Activated naive CD4-positive, alpha-beta T cell treated with anti-CD3 and anti-CD28 coated beads for 36 hours (primary cell): ENCODE measurements at regions of chr3 and their contacts with region 1.

Region 1: DNA sequence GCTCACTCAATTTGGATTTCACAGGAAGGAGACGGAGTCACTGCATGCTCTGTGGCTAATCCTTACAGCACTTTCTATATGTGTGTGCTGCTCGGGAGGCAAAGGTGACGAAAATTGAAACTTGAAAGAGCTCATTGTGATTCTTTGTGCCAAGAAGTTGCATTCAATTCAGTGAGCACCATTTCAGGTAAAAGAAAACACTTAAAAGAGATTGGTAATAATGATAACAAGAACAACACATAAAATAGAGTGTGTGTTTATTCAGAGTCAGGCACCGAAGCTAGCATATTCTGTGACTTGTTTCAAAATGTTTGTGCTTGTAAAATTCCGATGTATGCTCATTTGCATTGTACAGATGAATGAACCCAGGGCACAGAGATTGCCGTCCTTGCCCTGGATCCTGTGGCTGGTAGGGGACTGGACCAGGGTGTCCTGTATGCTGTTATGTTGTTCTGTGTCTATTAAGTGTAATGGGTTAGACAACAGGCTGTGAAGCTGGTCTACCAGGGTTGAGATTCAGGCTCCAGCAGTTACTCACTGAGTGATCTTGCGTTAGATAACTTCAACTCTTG is 193.3 kb upstream of the PROK2 start:
- DNase-seq: peak; percentile 76
- H3K4me3 Mint-ChIP-seq: no peak overlapping the region
- H3K27ac Mint-ChIP-seq: peak overlapping the region; percentile 82
- H3K4me1 Mint-ChIP-seq: peaks cover 33% of the 10 kb centered on the region
- H3K27me3 Mint-ChIP-seq: peaks cover 18% of the 10 kb centered on the region

Region 2: DNA sequence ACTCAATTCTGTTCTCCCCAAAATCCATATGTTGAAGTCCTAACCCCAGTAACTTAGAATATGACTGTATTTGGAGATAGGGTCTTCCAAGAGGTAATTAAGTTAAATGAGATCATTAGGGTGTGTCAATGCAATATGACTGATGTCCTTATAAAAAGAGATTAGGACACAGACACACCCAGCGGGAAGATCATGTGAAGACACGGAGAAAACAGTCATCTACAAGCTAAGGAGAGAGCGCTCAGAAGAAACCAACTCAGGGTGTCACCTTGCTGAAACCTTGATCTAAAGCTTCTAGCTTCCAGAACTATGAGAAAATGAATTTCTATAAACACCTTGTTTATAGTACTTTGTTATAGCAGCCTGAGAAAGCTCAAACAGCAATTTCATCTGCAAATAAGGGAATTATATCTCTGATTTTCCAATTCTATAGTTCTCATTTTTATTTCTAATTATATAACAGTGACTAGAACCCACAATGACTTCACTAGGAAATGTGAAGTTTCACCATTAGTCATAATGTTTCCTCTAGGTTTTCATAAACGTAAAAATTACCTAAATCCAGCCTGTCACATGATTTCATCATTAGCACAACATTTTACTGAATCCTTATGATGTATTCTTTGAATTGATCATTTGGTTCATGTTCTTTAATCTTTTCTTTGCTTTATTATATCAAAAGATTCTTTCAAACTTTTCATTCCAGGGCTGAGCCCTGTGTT is 1206.6 kb before region 1 on chr3:
- CTCF ChIA-PET with region 1: no interaction called
- intact Hi-C with region 1: loop called (anchors 10 kb)
- DNase-seq: no peak
- H3K4me3 Mint-ChIP-seq: no peak overlapping the region
- H3K27ac Mint-ChIP-seq: no peak overlapping the region
- H3K4me1 Mint-ChIP-seq: peaks cover 14% of the 10 kb centered on the region
- H3K27me3 Mint-ChIP-seq: peaks cover 25% of the 10 kb centered on the region

Region 3: DNA sequence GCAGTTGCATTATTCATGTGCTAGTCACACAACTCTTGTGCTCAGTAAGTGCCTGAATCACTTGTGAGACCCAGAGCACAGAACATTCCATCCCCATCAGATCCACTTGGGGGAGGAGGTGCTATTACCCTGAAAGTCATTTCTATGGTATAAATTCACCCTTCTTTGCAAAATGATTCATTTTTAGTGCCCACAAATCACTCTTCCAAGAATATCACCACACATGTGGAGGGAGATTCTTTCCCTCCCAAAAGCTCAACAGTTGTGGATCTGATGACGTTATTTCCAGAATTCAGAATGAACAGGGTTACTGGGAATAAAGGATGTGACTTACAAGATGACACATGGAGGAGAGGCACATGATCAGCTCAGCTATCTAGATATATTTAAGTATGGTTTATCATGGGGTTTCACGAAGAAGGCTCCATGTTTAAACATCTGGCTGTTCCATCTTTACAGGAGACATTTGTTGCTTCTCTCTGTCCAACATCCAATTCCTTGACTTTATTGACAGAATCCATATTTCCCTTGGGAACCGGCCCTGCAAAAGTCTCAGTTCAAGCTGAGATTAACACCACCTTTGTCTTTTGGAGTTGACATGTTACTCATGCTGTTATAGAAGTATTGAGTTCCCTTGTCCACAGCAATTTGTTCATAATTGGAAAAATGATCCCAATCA is 20.9 kb after region 1 on chr3:
- CTCF ChIA-PET with region 1: no interaction called
- intact Hi-C with region 1: loop called (anchors 2 kb)
- DNase-seq: no peak
- H3K4me3 Mint-ChIP-seq: no peak overlapping the region
- H3K27ac Mint-ChIP-seq: peak overlapping the region; percentile 10
- H3K4me1 Mint-ChIP-seq: peaks cover 7% of the 10 kb centered on the region
- H3K27me3 Mint-ChIP-seq: peaks cover 7% of the 10 kb centered on the region

Region 4: GRCh38 chr3:72100601-72101187 is 122.5 kb after region 1 on chr3:
- CTCF ChIA-PET with region 1: no interaction called
- intact Hi-C with region 1: loop called (anchors 1 kb)
- DNase-seq: peak; percentile 99
- H3K4me3 Mint-ChIP-seq: peak overlapping the region; percentile 79
- H3K27ac Mint-ChIP-seq: peak overlapping the region; percentile 89
- H3K4me1 Mint-ChIP-seq: peaks cover 26% of the 10 kb centered on the region
- H3K27me3 Mint-ChIP-seq: peaks cover 7% of the 10 kb centered on the region

Region 5: GRCh38 chr3:72129501-72130094 is 151.4 kb after region 1 on chr3:
- CTCF ChIA-PET with region 1: no interaction called
- intact Hi-C with region 1: no loop called
- DNase-seq: no peak
- H3K4me3 Mint-ChIP-seq: no peak overlapping the region
- H3K27ac Mint-ChIP-seq: no peak overlapping the region
- H3K4me1 Mint-ChIP-seq: peaks cover 10% of the 10 kb centered on the region
- H3K27me3 Mint-ChIP-seq: peaks cover 2% of the 10 kb centered on the region

Region 6: GRCh38 chr3:72339116-72340030 is 361.1 kb after region 1 on chr3:
- CTCF ChIA-PET with region 1: no interaction called
- intact Hi-C with region 1: loop called (anchors 2 kb)
- DNase-seq: no peak
- H3K4me3 Mint-ChIP-seq: no peak overlapping the region
- H3K27ac Mint-ChIP-seq: no peak overlapping the region
- H3K4me1 Mint-ChIP-seq: peaks cover 36% of the 10 kb centered on the region
- H3K27me3 Mint-ChIP-seq: no peaks in the 10 kb centered on the region

Region 7: DNA sequence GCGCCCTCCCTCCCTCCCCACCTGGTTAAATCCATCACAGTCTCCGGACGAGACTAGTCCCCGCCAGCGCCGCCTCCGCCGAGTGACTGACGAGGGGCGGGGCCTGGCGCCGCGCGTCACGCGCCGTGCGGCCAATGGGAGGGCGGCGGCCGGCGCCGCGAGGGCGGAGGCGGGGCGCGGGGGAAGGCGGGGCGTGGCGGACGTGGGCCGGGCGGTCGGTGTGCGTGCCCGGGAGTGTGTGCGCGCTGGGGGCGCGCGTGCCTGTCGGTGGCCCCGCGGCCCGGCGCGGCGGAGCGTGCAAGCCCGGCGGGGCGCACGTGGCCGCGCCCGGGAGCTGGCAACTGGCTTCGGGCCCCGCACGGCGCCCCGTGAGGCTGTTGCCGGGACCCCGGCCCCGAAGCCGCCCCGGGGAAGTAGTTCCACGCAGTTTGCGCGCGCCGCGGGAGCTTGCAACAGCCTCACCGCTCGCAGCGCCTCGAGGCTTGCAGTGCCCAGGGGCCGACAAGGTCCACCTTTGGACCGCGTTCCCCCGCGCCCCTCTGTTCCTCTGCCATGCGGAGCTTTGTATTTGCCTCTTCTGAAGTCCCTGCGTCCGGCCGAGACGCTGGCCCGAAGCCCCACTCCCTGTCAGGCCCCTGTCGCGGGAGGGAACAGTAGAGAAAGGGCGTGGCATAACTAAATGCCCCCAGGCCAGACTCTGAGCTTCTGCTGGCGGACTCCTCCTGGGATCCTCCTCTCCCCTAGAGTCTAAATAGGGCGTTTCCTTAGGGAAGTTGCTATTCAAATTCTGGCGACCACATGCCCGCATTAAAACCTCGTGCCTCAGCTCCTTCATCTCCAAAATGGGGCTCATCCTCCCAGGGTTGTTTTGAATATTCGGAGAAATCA is 469.1 kb after region 1 on chr3:
- CTCF ChIA-PET with region 1: no interaction called
- intact Hi-C with region 1: loop called (anchors 1 kb)
- DNase-seq: peak; percentile 88
- H3K4me3 Mint-ChIP-seq: peak overlapping the region; percentile 54
- H3K27ac Mint-ChIP-seq: no peak overlapping the region
- H3K4me1 Mint-ChIP-seq: peaks cover 37% of the 10 kb centered on the region
- H3K27me3 Mint-ChIP-seq: peaks cover 12% of the 10 kb centered on the region

Region 8: DNA sequence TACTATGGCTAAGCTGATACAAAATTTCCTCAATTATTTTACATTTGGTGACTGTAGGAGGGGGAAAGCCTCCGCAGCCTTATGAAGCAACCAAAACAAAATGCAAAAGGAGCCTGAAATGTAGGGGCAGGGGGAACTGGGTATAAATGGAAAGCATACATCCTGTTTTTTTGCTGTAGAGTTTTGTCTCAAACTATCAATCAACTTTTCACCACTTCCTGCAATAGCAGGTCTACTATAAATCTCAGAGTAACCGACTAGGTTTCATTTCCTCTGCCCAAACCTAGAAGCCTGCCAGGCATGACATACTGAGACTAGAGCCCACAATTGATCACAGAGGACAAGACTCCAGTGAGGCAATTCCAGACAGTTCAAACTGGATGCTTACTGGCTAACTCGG is 778.7 kb after region 1 on chr3:
- CTCF ChIA-PET with region 1: no interaction called
- intact Hi-C with region 1: loop called (anchors 1 kb)
- DNase-seq: peak; percentile 73
- H3K4me3 Mint-ChIP-seq: peak overlapping the region; percentile 17
- H3K27ac Mint-ChIP-seq: peak overlapping the region; percentile 83
- H3K4me1 Mint-ChIP-seq: peaks cover 74% of the 10 kb centered on the region
- H3K27me3 Mint-ChIP-seq: no peaks in the 10 kb centered on the region